K562 (cell line): ENCODE measurements at regions of chr22 and their contacts with region 1.

Region 1: DNA sequence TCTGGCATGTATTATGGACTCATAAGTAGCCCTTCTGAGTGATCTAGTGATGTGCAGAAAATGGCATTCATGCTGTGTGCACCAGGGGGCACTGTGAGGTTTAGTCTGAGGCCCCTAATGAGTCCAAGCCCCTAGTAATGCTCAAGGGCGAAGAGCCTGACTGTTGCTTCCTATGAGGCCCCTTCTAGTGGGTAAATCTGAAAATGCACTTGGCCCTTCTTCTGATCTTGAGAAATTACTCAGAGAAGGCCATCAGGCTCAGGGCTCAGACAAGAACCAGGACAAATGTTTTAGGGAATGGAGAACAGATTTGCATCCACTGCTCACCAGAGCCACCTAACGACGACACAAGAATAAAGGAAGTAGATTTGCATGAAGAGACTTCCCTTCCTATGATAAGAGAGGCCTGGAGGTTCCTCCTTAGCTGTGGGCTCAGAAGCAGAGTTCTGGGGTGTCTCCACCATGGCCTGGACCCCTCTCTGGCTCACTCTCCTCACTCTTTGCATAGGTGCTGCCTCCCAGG is 75.8 kb downstream of the GGTLC2 start:
- DNase-seq: peak; percentile 93 to 96 (median 94)
- ATAC-seq: peak; percentile 97
- H3K4me3 ChIP-seq: no peak overlapping the region
- H3K27ac ChIP-seq: no peak overlapping the region
- H3K4me1 ChIP-seq: peaks cover 0 to 25% of the 10 kb centered on the region in 2 experiments; a peak in 3 of 5 replicates
- H3K27me3 ChIP-seq: peaks cover 0 to 12% of the 10 kb centered on the region in 2 experiments; a peak in 2 of 5 replicates
- CTCF ChIP-seq: no peak
- EP300 ChIP-seq: no peak
- POLR2A ChIP-seq: no peak
- RAD21 ChIP-seq: no peak

Region 2: GRCh38 chr22:22655452-22656290 is 64.6 kb before region 1 on chr22:
- CTCF ChIA-PET with region 1: no interaction called
- POLR2A ChIA-PET with region 1: no interaction called
- in situ Hi-C with region 1: no loop called
- intact Hi-C with region 1: loop called (anchors 5 kb)
- DNase-seq: no peak
- ATAC-seq: no peak; the same call in 1 of the 3 replicates
- H3K4me3 ChIP-seq: no peak overlapping the region
- H3K27ac ChIP-seq: no peak overlapping the region
- H3K4me1 ChIP-seq: peaks cover 0 to 21% of the 10 kb centered on the region in 2 experiments; a peak in 3 of 5 replicates
- H3K27me3 ChIP-seq: peaks cover 28 to 48% of the 10 kb centered on the region in 2 experiments
- CTCF ChIP-seq: no peak
- EP300 ChIP-seq: no peak
- POLR2A ChIP-seq: no peak
- RAD21 ChIP-seq: no peak

Region 3: GRCh38 chr22:22692707-22693530 is 27.3 kb before region 1 on chr22:
- CTCF ChIA-PET with region 1: interaction called, 14 read pairs
- POLR2A ChIA-PET with region 1: interaction called, 4 read pairs
- in situ Hi-C with region 1: no loop called
- intact Hi-C with region 1: no loop called
- DNase-seq: peak; percentile 96 to 100 (median 99)
- ATAC-seq: peak; percentile 94
- H3K4me3 ChIP-seq: no peak overlapping the region
- H3K27ac ChIP-seq: no peak overlapping the region
- H3K4me1 ChIP-seq: no peaks in the 10 kb centered on the region
- H3K27me3 ChIP-seq: peaks cover 0 to 27% of the 10 kb centered on the region in 2 experiments; a peak in 2 of 5 replicates
- CTCF ChIP-seq: no peak
- EP300 ChIP-seq: no peak
- POLR2A ChIP-seq: no peak
- RAD21 ChIP-seq: no peak

Region 4: GRCh38 chr22:22753526-22754267 is 33.4 kb after region 1 on chr22:
- CTCF ChIA-PET with region 1: interaction called, 21 read pairs
- POLR2A ChIA-PET with region 1: interaction called, 11 read pairs
- in situ Hi-C with region 1: no loop called
- intact Hi-C with region 1: loop called (anchors 1 kb)
- DNase-seq: peak; percentile 96 to 100 (median 100)
- ATAC-seq: peak; percentile 97
- H3K4me3 ChIP-seq: no peak overlapping the region
- H3K27ac ChIP-seq: no peak overlapping the region
- H3K4me1 ChIP-seq: no peaks in the 10 kb centered on the region
- H3K27me3 ChIP-seq: peaks cover 2 to 20% of the 10 kb centered on the region in 2 experiments; a peak in 3 of 5 replicates
- CTCF ChIP-seq: peak in 1 of 3 experiments; percentile 100; a peak in 2 of 6 replicates
- EP300 ChIP-seq: no peak; the same call in 1 of the 2 replicates
- POLR2A ChIP-seq: no peak
- RAD21 ChIP-seq: peak in 1 of 2 experiments; percentile 98; a peak in 2 of 4 replicates

Region 5: DNA sequence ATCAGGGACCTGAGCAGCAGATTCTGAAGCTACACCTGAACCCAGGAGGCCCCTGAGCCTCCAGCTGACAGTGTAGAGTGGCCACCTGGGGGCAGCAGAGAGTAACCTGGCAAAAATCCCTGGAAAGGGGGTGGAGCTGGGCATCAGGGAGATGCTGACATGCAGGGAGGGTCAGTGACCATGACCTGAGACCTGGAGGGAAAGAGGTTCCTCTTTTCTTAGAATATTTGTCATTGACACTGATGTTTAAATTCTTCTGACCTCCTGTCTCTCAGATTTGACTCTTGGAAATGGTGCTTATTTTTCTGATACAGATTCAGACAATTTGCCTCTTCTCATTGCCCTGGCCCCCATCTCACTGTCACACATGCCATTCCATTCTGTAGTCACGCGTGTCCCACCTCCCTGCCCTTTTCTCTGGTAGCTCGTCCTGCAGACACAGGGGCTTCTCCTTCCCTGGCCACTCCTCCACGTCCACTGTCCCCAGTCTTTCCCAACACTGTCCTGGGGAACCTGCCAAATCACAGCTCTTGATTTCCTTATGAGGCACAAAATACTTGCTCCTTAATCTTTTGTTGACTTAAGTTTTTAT is 50.1 kb after region 1 on chr22:
- CTCF ChIA-PET with region 1: interaction called, 5 read pairs
- POLR2A ChIA-PET with region 1: interaction called, 3 read pairs
- in situ Hi-C with region 1: no loop called
- intact Hi-C with region 1: loop called (anchors 5 kb)
- DNase-seq: peak; percentile 96 to 100 (median 98)
- ATAC-seq: peak; percentile 94
- H3K4me3 ChIP-seq: no peak overlapping the region
- H3K27ac ChIP-seq: no peak overlapping the region
- H3K4me1 ChIP-seq: no peaks in the 10 kb centered on the region
- H3K27me3 ChIP-seq: peaks cover 0 to 32% of the 10 kb centered on the region in 2 experiments; a peak in 2 of 5 replicates
- CTCF ChIP-seq: peak in 1 of 3 experiments; percentile 100; a peak in 2 of 6 replicates
- EP300 ChIP-seq: peak; percentile 71
- POLR2A ChIP-seq: no peak
- RAD21 ChIP-seq: no peak

Region 6: DNA sequence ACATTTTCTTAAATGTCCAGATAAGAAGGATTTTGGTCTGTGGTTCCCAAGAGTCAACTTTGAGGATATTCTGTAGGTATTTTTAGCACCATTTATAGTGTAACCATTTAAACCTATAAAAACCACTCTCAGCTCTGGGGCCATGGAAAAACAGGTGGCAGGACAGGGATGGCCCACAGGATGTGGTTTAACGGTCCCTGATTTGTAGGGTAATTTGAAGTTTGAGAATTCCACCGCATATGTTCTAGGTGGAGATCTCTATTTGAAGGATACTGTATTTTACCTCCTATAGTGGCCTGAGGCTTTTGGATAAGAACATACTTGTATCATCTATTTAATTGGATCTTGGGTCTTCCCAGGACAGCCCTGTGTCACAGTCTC is 104.9 kb after region 1 on chr22:
- CTCF ChIA-PET with region 1: no interaction called
- POLR2A ChIA-PET with region 1: no interaction called
- in situ Hi-C with region 1: no loop called
- intact Hi-C with region 1: no loop called
- DNase-seq: no peak
- ATAC-seq: no peak
- H3K4me3 ChIP-seq: no peak overlapping the region
- H3K27ac ChIP-seq: no peak overlapping the region
- H3K4me1 ChIP-seq: no peaks in the 10 kb centered on the region
- H3K27me3 ChIP-seq: peaks cover 22 to 29% of the 10 kb centered on the region in 2 experiments
- CTCF ChIP-seq: no peak
- EP300 ChIP-seq: no peak
- POLR2A ChIP-seq: no peak
- RAD21 ChIP-seq: no peak

Region 7: DNA sequence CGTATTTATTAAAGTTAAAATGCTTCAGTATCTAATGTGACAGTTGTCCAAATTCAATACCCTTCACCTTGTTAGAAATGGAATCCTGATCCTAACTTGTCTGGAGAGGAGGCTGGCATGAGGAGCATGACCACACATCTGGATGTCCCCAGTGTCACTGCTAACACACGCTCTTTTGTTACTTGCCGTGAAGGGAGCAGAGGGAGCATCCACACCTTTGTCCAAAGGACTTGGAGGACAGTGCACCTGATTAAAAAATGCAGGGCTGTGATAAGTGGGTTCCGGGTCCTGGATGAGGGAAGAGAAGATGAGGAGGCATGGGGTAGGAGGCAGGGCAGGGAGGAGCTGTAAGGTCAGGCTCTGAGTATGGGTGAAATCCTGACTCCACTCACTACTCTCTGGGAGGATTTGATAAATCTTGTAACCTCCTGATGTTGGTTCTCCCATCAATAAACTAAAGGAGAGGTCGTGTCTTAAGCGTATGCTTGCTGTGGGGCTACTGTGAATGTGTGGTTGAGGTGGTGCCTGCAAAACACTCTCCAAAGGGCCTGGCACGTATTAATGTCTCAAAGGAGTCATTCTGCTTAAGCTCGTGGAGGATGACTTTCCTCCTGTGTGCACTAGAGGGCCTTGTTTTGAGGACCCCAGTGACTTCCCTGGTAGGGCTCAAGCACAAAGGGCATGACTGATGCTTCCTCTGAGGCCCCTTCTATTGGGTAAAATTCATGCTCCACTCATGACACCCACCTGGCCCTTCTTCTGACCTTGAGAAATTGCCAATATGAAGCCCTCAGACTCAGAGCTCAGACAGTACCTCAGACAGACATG is 150.5 kb after region 1 on chr22:
- CTCF ChIA-PET with region 1: no interaction called
- POLR2A ChIA-PET with region 1: no interaction called
- in situ Hi-C with region 1: no loop called
- intact Hi-C with region 1: no loop called
- DNase-seq: peak; percentile 53 to 84 (median 70)
- ATAC-seq: peak; percentile 82
- H3K4me3 ChIP-seq: no peak overlapping the region
- H3K27ac ChIP-seq: no peak overlapping the region
- H3K4me1 ChIP-seq: no peaks in the 10 kb centered on the region
- H3K27me3 ChIP-seq: peaks cover 0 to 45% of the 10 kb centered on the region in 2 experiments; a peak in 3 of 5 replicates
- CTCF ChIP-seq: no peak
- EP300 ChIP-seq: no peak
- POLR2A ChIP-seq: no peak
- RAD21 ChIP-seq: no peak

Region 8: GRCh38 chr22:23119494-23120414 is 399.5 kb after region 1 on chr22:
- CTCF ChIA-PET with region 1: no interaction called
- POLR2A ChIA-PET with region 1: no interaction called
- in situ Hi-C with region 1: no loop called
- intact Hi-C with region 1: loop called (anchors 5 kb)
- DNase-seq: peak in 2 of 4 experiments; percentile 66 to 80
- ATAC-seq: peak; percentile 65
- H3K4me3 ChIP-seq: no peak overlapping the region
- H3K27ac ChIP-seq: no peak overlapping the region
- H3K4me1 ChIP-seq: peaks cover 9 to 29% of the 10 kb centered on the region in 2 experiments; a peak in 4 of 5 replicates
- H3K27me3 ChIP-seq: peaks cover 50 to 95% of the 10 kb centered on the region in 2 experiments
- CTCF ChIP-seq: peak in 2 of 3 experiments; percentile 32 to 46; a peak in 3 of 6 replicates
- EP300 ChIP-seq: no peak
- POLR2A ChIP-seq: no peak
- RAD21 ChIP-seq: peak in 1 of 2 experiments; percentile 27; a peak in 2 of 4 replicates